Activated T-helper 2 cell treated with anti-CD3 and anti-CD28 coated beads, Interferon-gamma antibody, Interleukin-2, Interleukin-4, amounts not matched to agents 10 μg/mL and 5 μg/mL and 100 μg/mL, durations not matched to agents 14 hours and 24 hours and 36 hours (primary cell): ENCODE measurements at regions of chr13 and their contacts with region 1.

Region 1: GRCh38 chr13:50365408-50366391 is 350.5 kb downstream of the KCNRG start:
- DNase-seq: peak; percentile 61
- H3K4me3 Mint-ChIP-seq: peak overlapping the region; percentile 3
- H3K27ac Mint-ChIP-seq: peak overlapping the region; percentile 53
- H3K4me1 Mint-ChIP-seq: peaks cover 48% of the 10 kb centered on the region
- H3K27me3 Mint-ChIP-seq: peaks cover 67% of the 10 kb centered on the region

Region 2: GRCh38 chr13:50123862-50124536 is 241.7 kb before region 1 on chr13:
- intact Hi-C with region 1: loop called (anchors 2 kb)
- DNase-seq: peak; percentile 58
- H3K4me3 Mint-ChIP-seq: peak overlapping the region; percentile 78
- H3K27ac Mint-ChIP-seq: peak overlapping the region; percentile 80
- H3K4me1 Mint-ChIP-seq: peaks cover 32% of the 10 kb centered on the region
- H3K27me3 Mint-ChIP-seq: peaks cover 29% of the 10 kb centered on the region

Region 3: DNA sequence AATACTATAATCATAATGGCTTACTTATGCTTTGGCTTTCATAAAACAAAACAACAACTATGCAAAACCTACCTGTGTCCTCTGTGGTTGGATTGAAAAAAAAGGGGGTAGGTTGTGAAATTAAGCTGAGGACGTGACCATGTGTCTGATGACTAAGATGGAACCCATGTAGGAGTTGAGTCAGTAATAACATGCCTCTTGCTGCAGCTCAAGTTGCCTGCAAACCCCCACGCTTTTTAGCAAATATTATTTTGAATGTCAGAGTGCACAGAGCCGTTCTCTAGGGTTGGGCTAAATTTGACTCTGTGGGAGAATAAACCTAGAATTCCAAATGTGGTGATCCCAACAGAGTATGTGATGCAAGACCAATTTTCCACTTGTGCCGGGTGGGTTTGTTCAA is 141.2 kb before region 1 on chr13:
- intact Hi-C with region 1: loop called (anchors 2 kb)
- DNase-seq: no peak
- H3K4me3 Mint-ChIP-seq: no peak overlapping the region
- H3K27ac Mint-ChIP-seq: no peak overlapping the region
- H3K4me1 Mint-ChIP-seq: peaks cover 49% of the 10 kb centered on the region
- H3K27me3 Mint-ChIP-seq: peaks cover 56% of the 10 kb centered on the region

Region 4: DNA sequence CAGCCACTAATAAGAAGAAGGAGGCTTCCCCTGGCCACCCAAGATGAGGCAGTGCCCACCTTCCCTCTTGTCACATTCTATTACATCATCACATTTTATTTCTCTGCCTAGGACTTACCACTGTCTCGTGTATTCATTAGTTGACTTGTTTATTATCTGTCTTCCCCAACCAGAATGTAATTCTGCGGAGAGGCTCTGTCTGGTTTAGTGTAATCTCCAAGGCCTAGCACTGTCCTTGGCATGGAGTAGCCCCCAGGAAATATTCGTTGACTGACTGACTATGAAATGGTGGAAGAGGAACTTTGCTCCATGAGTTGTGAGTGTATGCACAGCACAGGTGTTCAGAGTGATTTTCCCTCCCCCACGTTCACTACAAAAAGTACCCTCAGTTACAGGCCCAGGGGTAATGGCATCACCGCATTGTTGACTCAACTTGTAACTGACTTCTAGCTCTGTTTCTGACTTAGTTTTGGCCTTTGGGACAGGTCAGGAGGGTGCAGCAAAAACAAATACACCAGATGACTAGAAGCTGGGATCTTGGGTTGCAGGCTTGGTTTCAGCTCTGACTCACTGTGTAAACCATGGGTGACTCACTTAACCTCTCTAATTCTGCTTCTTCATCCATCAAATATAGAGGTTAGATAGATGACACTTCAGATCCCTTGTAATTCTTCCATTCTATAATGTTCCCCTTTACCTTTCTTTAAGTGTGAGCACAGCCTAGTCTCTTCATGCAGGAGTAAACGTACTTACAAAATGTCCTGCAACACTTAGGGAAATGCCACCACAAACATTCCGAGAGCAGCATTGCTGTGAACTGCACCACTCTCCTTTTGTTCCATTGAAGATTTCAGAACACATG is 120.8 kb before region 1 on chr13:
- intact Hi-C with region 1: loop called (anchors 1 kb)
- DNase-seq: peak; percentile 28
- H3K4me3 Mint-ChIP-seq: peak overlapping the region; percentile 10
- H3K27ac Mint-ChIP-seq: peak overlapping the region; percentile 34
- H3K4me1 Mint-ChIP-seq: peaks cover 36% of the 10 kb centered on the region
- H3K27me3 Mint-ChIP-seq: peaks cover 53% of the 10 kb centered on the region

Region 5: DNA sequence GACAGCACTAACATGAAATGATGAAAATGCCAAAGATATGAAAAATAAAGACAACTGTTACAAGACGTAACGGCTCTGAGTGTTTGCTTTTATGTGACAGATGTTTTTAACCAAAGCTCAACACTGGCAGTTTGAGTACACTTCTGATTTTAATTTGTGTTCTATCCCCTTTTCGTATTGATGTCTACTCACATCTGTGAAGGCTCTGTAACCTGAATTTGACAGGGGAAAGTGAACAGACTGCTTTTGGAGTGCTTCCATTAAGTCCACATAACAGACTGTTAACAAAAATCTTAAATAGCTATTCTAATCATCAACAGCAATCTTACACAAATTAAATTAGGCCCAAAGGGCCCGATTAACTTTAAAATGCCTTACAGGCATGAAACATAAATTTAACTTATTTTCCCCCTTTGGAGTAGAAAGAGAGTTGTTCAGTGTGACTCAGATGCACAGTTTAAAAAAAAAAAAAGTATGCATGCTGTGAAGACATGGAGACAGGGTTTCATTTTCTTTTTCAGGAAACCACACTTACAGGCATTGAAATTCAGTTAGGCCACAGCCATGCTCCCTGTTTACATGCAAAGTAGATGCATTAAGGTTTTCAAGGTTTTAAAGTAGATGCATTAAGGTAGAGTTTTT is 527.6 kb after region 1 on chr13:
- intact Hi-C with region 1: loop called (anchors 5 kb)
- DNase-seq: no peak
- H3K4me3 Mint-ChIP-seq: peak overlapping the region; percentile 51
- H3K27ac Mint-ChIP-seq: peak overlapping the region; percentile 88
- H3K4me1 Mint-ChIP-seq: peaks cover 48% of the 10 kb centered on the region
- H3K27me3 Mint-ChIP-seq: no peaks in the 10 kb centered on the region